B cell (primary cell): ENCODE measurements at regions of chr19 and their contacts with region 1.

Region 1: DNA sequence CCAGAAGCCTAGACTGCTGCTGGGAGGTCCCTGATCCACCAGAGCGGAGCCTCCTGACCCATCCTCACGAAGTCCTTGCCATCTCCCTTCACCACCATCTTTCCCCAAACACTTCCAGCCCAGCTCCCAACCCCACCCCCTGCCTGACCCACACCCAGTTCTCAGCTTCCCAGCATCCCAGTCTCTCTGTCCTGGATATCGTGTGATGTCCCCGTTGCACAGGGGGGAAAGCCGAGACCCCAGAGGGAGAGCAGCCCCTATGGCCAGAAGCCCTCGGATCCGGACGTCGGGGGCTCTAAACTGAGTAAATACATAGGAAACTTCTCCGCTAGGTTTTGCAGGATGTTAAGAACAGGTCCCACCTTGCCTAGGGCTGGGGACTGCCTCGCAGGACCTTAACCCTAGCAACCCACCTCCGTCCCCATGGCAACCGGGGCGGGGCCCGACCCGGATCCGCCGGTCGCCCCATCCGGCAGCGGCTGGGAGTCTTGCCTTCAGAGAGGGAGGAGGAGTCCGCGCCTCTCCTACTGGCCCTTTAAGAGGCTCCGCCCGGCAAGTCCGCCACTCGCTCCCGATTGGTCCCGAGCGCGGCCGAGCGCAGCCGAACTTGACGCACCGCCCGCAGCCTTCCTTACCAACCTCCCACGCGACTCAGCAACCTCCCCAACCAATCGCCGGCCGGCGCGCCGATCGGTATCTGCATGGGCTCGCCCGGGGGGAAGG is 451 bp upstream of the HMG20B start:
- DNase-seq: peak; percentile 99
- ATAC-seq: peak; percentile 94
- H3K4me3 ChIP-seq: peak overlapping the region; percentile 11 to 74 (median 54)
- H3K4me3 Mint-ChIP-seq: peak overlapping the region; percentile 86
- H3K27ac ChIP-seq: peak overlapping the region; percentile 24 to 65
- H3K27ac Mint-ChIP-seq: peak overlapping the region; percentile 83
- H3K4me1 ChIP-seq: peaks cover 12 to 18% of the 10 kb centered on the region in 2 donors
- H3K4me1 Mint-ChIP-seq: peaks cover 16% of the 10 kb centered on the region
- H3K27me3 ChIP-seq: no peaks in the 10 kb centered on the region
- H3K27me3 Mint-ChIP-seq: no peaks in the 10 kb centered on the region
- CTCF ChIP-seq: no peak

Region 2: GRCh38 chr19:3505598-3506383 is 66.5 kb before region 1 on chr19 and contains the start of gene FZR1:
- CTCF ChIA-PET with region 1: no interaction called
- POLR2A ChIA-PET with region 1: no interaction called
- intact Hi-C with region 1: loop called (anchors 1 kb)
- DNase-seq: peak; percentile 100
- ATAC-seq: peak; percentile 91
- H3K4me3 ChIP-seq: peak within 1 kb of the TSS; percentile 74 to 95 (median 77)
- H3K4me3 Mint-ChIP-seq: peak within 1 kb of the TSS; percentile 92
- H3K27ac ChIP-seq: peak within 1 kb of the TSS; percentile 92 to 94
- H3K27ac Mint-ChIP-seq: peak within 1 kb of the TSS; percentile 99
- H3K4me1 ChIP-seq: peaks cover 12 to 21% of the 10 kb centered on the region in 2 donors
- H3K4me1 Mint-ChIP-seq: peaks cover 49% of the 10 kb centered on the region
- H3K27me3 ChIP-seq: no peaks in the 10 kb centered on the region
- H3K27me3 Mint-ChIP-seq: no peaks in the 10 kb centered on the region
- CTCF ChIP-seq: no peak
- total RNA-seq, gene FZR1: 96.1 and 105 TPM in 2 replicates

Region 3: DNA sequence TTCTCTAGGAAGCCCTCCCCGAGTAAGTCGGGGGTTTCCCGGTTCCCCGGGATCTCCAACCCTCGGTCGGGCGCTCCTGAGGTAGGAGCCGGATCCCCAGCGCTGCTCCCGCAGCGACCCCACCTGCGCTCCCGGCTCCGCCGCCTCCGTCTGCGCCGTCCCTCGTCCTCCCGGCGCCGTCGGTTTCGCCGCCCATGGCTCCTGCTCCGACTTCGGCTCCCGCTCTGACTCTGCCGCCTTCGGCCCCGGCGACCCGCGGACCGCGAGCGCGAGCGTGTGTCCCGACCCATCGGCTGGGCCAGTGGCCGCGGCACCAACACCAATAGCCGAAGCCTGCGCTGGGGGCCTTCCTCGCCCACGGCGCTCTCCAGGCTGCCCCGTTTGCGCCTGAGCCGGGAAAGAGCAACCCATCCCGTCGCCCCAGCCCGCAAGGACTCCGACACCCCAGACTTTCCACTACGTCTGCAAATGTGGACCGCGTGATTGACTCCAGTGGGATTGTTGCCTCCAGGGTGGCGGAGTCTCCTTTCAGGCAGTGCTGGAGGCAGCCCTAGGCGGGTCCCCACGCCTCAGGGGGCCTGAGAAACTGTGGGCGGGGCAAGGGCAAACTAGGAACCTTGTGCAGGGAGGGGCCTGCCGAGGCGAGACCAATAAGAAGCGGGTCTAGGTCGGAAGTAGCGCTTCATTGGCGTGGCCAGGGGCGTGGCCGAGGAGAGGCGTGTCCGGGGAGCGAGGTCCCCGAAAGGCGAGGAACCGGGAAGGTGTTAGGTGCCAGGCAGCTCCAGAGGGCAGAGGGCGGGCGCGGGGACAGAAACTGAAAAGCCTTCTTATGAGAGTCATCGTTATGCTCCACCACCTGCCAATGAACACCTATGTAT is 54.4 kb after region 1 on chr19 and contains the start of gene CACTIN:
- CTCF ChIA-PET with region 1: no interaction called
- POLR2A ChIA-PET with region 1: no interaction called
- intact Hi-C with region 1: loop called (anchors 1 kb)
- DNase-seq: peak; percentile 99
- ATAC-seq: peak; percentile 98
- H3K4me3 ChIP-seq: peak within 1 kb of the TSS; percentile 70 to 98 (median 76)
- H3K4me3 Mint-ChIP-seq: peak within 1 kb of the TSS; percentile 96
- H3K27ac ChIP-seq: peak within 1 kb of the TSS; percentile 96 to 98
- H3K27ac Mint-ChIP-seq: peak within 1 kb of the TSS; percentile 100
- H3K4me1 ChIP-seq: peaks cover 17 to 21% of the 10 kb centered on the region in 2 donors
- H3K4me1 Mint-ChIP-seq: peaks cover 26% of the 10 kb centered on the region
- H3K27me3 ChIP-seq: no peaks in the 10 kb centered on the region
- H3K27me3 Mint-ChIP-seq: no peaks in the 10 kb centered on the region
- CTCF ChIP-seq: no peak
- total RNA-seq, gene CACTIN: 41.8 and 48.0 TPM in 2 replicates